GM12878 (cell line): ENCODE measurements at regions of chr11 and their contacts with region 1.

Region 1: GRCh38 chr11:75051043-75051442 is 45.6 kb downstream of the OR2AT4 start:
- DNase-seq: no peak
- ATAC-seq: peak; percentile 47
- H3K4me3 ChIP-seq: no peak overlapping the region
- H3K27ac ChIP-seq: 0 out of 2 replicates have a peak overlapping the region, but pooled peaks have one; percentile 17
- H3K4me1 ChIP-seq: peaks cover 18% of the 10 kb centered on the region
- H3K27me3 ChIP-seq: no peaks in the 10 kb centered on the region
- CTCF ChIP-seq: no peak
- EP300 ChIP-seq: no peak
- POLR2A ChIP-seq: no peak
- RAD21 ChIP-seq: no peak

Region 2: GRCh38 chr11:75031771-75032549 is 19.1 kb before region 1 on chr11:
- CTCF ChIA-PET with region 1: interaction called, 11 read pairs
- POLR2A ChIA-PET with region 1: no interaction called
- RAD21 ChIA-PET with region 1: no interaction called
- SMC1A ChIA-PET with region 1: interaction called, 14 read pairs
- in situ Hi-C with region 1: no loop called
- intact Hi-C with region 1: no loop called
- DNase-seq: no peak
- ATAC-seq: peak; percentile 88
- H3K4me3 ChIP-seq: no peak overlapping the region
- H3K27ac ChIP-seq: no peak overlapping the region
- H3K4me1 ChIP-seq: peaks cover 10% of the 10 kb centered on the region; the same call in 1 of the 2 replicates
- H3K27me3 ChIP-seq: no peaks in the 10 kb centered on the region
- CTCF ChIP-seq: peak; percentile 78 to 86 (median 79)
- EP300 ChIP-seq: no peak
- POLR2A ChIP-seq: no peak
- RAD21 ChIP-seq: peak; percentile 66

Region 3: GRCh38 chr11:75069473-75069872 is 18.4 kb after region 1 on chr11:
- CTCF ChIA-PET with region 1: interaction called, 6 read pairs
- POLR2A ChIA-PET with region 1: interaction called, 3 read pairs
- RAD21 ChIA-PET with region 1: interaction called, 6 read pairs
- SMC1A ChIA-PET with region 1: interaction called, 10 read pairs
- in situ Hi-C with region 1: no loop called
- intact Hi-C with region 1: no loop called
- DNase-seq: peak; percentile 21
- ATAC-seq: peak; percentile 91
- H3K4me3 ChIP-seq: no peak overlapping the region
- H3K27ac ChIP-seq: no peak overlapping the region
- H3K4me1 ChIP-seq: peaks cover 8% of the 10 kb centered on the region
- H3K27me3 ChIP-seq: no peaks in the 10 kb centered on the region
- CTCF ChIP-seq: no peak
- EP300 ChIP-seq: no peak
- POLR2A ChIP-seq: no peak
- RAD21 ChIP-seq: no peak

Region 4: GRCh38 chr11:75100314-75100713 is 49.3 kb after region 1 on chr11:
- CTCF ChIA-PET with region 1: interaction called, 3 read pairs
- POLR2A ChIA-PET with region 1: interaction called, 3 read pairs
- RAD21 ChIA-PET with region 1: interaction called, 3 read pairs
- SMC1A ChIA-PET with region 1: interaction called, 20 read pairs
- in situ Hi-C with region 1: no loop called
- intact Hi-C with region 1: loop called (anchors 5 kb)
- DNase-seq: peak; percentile 78
- ATAC-seq: peak; percentile 97
- H3K4me3 ChIP-seq: peak overlapping the region; percentile 1; the same call in 1 of the 2 replicates
- H3K27ac ChIP-seq: peak overlapping the region; percentile 57
- H3K4me1 ChIP-seq: peaks cover 8% of the 10 kb centered on the region; the same call in 1 of the 2 replicates
- H3K27me3 ChIP-seq: no peaks in the 10 kb centered on the region
- CTCF ChIP-seq: no peak
- EP300 ChIP-seq: no peak; a peak in 1 of 4 replicates
- POLR2A ChIP-seq: no peak
- RAD21 ChIP-seq: no peak